ENCODE measurements at regions of chr3 and their contacts with region 1.

Region 1: GRCh38 chr3:4350789-4351163 is 47.6 kb downstream of the SETMAR start:
- DNase-seq: peak; percentile 66
- ATAC-seq: peak; percentile 67
- H3K4me3 Mint-ChIP-seq: peak overlapping the region; percentile 74
- H3K27ac Mint-ChIP-seq: peak overlapping the region; percentile 48
- H3K4me1 Mint-ChIP-seq: peaks cover 17% of the 10 kb centered on the region
- H3K27me3 Mint-ChIP-seq: no peaks in the 10 kb centered on the region

Region 2: DNA sequence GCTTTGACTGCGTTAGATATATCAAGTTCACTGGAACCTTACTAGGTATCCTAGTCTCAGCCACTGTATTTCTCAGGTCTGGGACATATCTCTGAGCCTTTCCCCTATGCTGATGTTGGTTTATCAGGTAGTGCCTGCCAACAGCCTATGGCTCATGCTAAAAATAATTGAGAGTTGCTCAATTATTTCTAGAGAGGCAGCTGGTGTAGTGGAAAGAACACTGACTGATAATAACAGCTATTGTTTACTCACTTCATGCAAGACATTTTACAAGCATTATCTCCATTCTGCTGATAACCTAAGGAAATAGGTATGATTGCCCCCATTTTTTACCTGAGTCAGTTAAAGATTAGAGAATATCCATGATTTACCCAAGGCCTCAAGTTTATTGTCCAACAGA is 320.2 kb before region 1 on chr3:
- CTCF ChIA-PET with region 1: no interaction called
- POLR2A ChIA-PET with region 1: no interaction called
- intact Hi-C with region 1: no loop called
- DNase-seq: no peak
- ATAC-seq: no peak
- H3K4me3 Mint-ChIP-seq: no peak overlapping the region
- H3K27ac Mint-ChIP-seq: no peak overlapping the region
- H3K4me1 Mint-ChIP-seq: no peaks in the 10 kb centered on the region
- H3K27me3 Mint-ChIP-seq: no peaks in the 10 kb centered on the region

Region 3: DNA sequence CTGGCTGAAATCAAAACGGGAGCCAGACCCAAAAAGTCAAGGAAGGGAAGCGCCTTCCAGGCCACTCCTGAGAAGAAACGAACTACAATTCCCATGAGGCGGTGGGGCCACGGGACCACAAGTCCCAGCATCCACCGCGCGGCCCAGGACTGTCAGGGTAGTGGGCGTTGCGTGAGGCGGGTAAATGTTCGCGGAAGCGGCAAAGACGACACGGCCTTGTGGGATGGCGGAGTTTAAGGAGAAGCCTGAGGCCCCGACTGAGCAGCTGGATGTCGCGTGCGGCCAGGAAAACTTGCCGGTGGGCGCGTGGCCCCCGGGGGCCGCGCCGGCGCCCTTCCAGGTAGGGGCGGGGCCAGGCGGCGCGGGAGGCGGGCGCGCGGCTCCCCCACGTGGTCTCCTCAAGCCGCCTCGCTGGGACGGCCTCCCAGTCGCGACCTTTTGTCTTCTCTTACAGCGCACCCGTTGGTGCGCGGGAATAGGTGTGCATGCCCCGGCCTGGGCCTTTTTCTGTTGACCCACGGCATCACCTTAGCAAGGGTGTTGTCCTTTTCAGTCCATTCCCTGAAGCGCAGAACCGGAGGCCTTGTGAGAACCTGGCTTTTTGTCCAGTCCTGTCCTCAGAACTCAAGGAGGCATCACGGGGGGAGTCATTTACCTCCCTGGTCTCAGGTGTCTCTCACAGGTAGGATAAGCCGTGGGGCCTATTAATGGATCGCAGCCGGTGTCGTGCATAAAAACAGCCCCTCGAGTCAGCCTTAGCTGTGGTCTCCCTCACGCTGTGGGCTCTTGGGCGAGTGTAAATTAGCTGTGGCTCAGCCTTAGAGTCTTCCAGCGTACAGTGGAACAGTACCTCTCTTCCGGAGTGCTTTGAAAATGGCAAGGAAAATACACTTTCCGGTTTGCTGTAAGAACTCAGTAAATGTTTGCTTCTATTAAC is 47.3 kb before region 1 on chr3 and contains the start of gene SETMAR:
- CTCF ChIA-PET with region 1: interaction called, 3 read pairs
- POLR2A ChIA-PET with region 1: no interaction called
- intact Hi-C with region 1: loop called in 1 of 2 experiments (anchors 1 kb)
- DNase-seq: peak; percentile 93
- ATAC-seq: peak; percentile 96
- H3K4me3 Mint-ChIP-seq: peak within 1 kb of the TSS; percentile 79
- H3K27ac Mint-ChIP-seq: peak within 1 kb of the TSS; percentile 96
- H3K4me1 Mint-ChIP-seq: peaks cover 26% of the 10 kb centered on the region
- H3K27me3 Mint-ChIP-seq: no peaks in the 10 kb centered on the region
- total RNA-seq, gene SETMAR: 19.3 to 19.4 TPM

Region 4: GRCh38 chr3:4394048-4394447 is 43.3 kb after region 1 on chr3:
- CTCF ChIA-PET with region 1: interaction called, 11 read pairs
- POLR2A ChIA-PET with region 1: no interaction called
- intact Hi-C with region 1: no loop called
- DNase-seq: peak; percentile 41
- ATAC-seq: peak; percentile 75
- H3K4me3 Mint-ChIP-seq: no peak overlapping the region
- H3K27ac Mint-ChIP-seq: no peak overlapping the region
- H3K4me1 Mint-ChIP-seq: peaks cover 38% of the 10 kb centered on the region
- H3K27me3 Mint-ChIP-seq: no peaks in the 10 kb centered on the region

Region 5: GRCh38 chr3:4466741-4467521 is 116.2 kb after region 1 on chr3 and contains the start of gene SUMF1:
- CTCF ChIA-PET with region 1: interaction called, 10 read pairs
- POLR2A ChIA-PET with region 1: interaction called, 4 read pairs
- intact Hi-C with region 1: loop called (anchors 1 to 2 kb)
- DNase-seq: peak; percentile 88
- ATAC-seq: peak; percentile 98
- H3K4me3 Mint-ChIP-seq: peak within 1 kb of the TSS; percentile 87
- H3K27ac Mint-ChIP-seq: peak within 1 kb of the TSS; percentile 93
- H3K4me1 Mint-ChIP-seq: peaks cover 18% of the 10 kb centered on the region
- H3K27me3 Mint-ChIP-seq: no peaks in the 10 kb centered on the region
- total RNA-seq, gene SUMF1: 3.5 to 4.9 TPM

Region 6: DNA sequence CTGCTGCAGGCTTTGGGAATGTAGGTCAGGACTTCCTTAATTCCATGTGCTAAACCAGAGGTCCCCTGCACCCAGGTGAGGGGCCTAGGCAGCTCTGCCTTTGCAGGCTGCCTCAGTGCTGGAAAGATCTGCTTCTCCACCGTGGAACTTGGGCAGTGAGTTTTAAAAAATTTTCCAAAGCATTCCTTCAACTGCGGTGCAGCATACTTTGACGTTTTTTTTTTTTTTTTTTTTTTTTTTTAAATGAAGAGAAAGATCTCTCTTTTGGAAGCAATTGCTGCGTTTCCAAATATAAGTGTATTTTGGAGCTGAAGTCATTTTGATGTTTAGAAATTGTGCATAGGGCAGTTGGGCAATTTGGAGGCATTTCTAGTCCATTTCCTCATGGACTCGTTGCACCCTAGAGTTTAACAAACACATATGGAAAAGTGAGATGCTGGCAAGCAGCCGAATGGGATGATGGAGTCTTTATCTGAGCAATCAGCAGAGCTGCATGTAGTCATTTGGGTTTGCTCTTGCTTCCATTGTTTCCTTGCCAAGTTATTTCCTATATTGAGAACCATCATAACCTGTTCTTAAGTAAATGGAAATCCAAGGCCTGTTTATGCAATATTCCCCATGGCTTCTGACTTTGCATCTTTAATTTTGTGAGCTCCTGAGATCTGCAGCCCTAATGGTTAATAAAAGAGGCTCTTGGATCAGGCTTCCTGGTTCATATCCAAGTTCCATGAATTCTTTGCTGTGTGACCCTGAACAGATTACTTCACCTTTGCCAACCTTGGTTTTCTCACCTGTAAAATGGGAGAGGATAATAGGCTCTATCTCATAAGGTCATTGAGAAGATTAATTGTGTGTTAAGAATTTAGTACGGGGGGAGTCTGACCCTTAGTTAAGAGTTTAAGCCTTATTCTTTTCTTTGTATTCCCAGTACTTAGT is 173.6 kb after region 1 on chr3:
- CTCF ChIA-PET with region 1: interaction called, 21 read pairs
- POLR2A ChIA-PET with region 1: interaction called, 4 read pairs
- intact Hi-C with region 1: loop called (anchors 1 to 5 kb)
- DNase-seq: no peak
- ATAC-seq: no peak
- H3K4me3 Mint-ChIP-seq: no peak overlapping the region
- H3K27ac Mint-ChIP-seq: no peak overlapping the region
- H3K4me1 Mint-ChIP-seq: peaks cover 19% of the 10 kb centered on the region
- H3K27me3 Mint-ChIP-seq: no peaks in the 10 kb centered on the region

Region 7: GRCh38 chr3:4712143-4712542 is 361.4 kb after region 1 on chr3:
- CTCF ChIA-PET with region 1: interaction called, 13 read pairs
- POLR2A ChIA-PET with region 1: no interaction called
- intact Hi-C with region 1: no loop called
- DNase-seq: no peak
- ATAC-seq: no peak
- H3K4me3 Mint-ChIP-seq: no peak overlapping the region
- H3K27ac Mint-ChIP-seq: no peak overlapping the region
- H3K4me1 Mint-ChIP-seq: no peaks in the 10 kb centered on the region
- H3K27me3 Mint-ChIP-seq: no peaks in the 10 kb centered on the region

Region 8: DNA sequence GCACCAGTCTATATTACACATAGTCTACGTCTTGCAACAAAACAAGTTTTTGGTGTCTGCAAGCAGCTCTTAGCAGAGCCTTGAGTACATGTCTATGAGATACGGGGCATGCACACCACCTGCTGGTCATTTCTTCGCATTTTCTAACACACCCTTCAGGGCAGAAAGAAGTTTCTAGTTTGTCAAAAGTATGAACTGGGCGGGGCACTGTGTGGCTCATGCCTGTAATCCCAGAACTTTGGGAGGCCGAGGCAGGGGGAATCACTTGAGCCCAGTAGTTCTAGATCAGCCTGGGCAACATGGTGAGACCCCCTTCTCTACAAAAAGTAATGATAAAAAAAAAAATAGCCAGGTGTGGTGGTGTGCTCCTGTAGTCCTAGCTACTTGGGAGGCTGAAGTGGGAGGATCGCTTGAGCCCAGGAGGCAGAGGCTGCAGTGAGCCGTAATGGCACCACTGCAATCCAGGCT is 707.1 kb after region 1 on chr3:
- CTCF ChIA-PET with region 1: no interaction called
- POLR2A ChIA-PET with region 1: no interaction called
- intact Hi-C with region 1: loop called in 1 of 2 experiments (anchors 5 kb)
- DNase-seq: peak; percentile 87
- ATAC-seq: peak; percentile 96
- H3K4me3 Mint-ChIP-seq: no peak overlapping the region
- H3K27ac Mint-ChIP-seq: peak overlapping the region; percentile 11
- H3K4me1 Mint-ChIP-seq: peaks cover 17% of the 10 kb centered on the region
- H3K27me3 Mint-ChIP-seq: peaks cover 8% of the 10 kb centered on the region

Measured in activated CD4-positive, alpha-beta T cell treated with anti-CD3 and anti-CD28 coated beads for 36 hours (primary cell).